ENCODE measurements at regions of chr1 and their contacts with region 1.

Region 1: GRCh38 chr1:71093938-71094337 is 13.1 kb upstream of the ZRANB2 start:
- DNase-seq: no peak
- H3K4me3 ChIP-seq: no peak overlapping the region
- H3K4me3 Mint-ChIP-seq: no peak overlapping the region
- H3K27ac ChIP-seq: no peak overlapping the region
- H3K27ac Mint-ChIP-seq: no peak overlapping the region
- H3K4me1 ChIP-seq: no peaks in the 10 kb centered on the region
- H3K4me1 Mint-ChIP-seq: no peaks in the 10 kb centered on the region
- H3K27me3 ChIP-seq: no peaks in the 10 kb centered on the region
- H3K27me3 Mint-ChIP-seq: peaks cover 2 to 12% of the 10 kb centered on the region in 2 donors

Region 2: DNA sequence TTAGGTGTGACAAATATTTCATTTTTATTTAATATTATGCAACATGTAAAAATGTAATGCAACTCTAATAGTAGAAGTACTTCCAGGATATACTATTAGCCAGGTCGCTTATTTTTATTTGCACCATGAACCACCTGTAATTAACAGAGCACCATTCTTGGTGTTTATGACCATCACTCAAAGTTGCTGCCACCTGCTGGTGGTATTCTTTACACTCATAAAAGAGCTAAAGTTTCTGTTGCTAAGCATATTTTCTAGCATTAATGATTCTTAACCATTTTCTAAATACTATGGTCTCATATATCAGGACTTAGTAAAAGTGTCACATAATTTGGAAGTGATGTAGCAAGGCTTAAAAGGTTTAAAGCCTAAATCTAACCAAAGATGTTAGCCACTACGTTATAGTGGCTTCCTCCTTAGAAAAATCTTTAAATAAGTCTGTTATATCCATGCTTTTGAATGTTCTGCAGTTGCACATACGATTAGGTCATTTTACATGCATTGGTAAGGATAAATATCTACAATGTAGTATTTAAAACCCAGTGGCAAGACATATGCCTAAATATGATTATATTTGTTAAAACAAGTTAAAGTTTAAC is 943.9 kb after region 1 on chr1:
- CTCF ChIA-PET with region 1: no interaction called
- POLR2A ChIA-PET with region 1: no interaction called
- intact Hi-C with region 1: loop called (anchors 5 kb)
- DNase-seq: no peak
- H3K4me3 ChIP-seq: no peak overlapping the region
- H3K4me3 Mint-ChIP-seq: no peak overlapping the region
- H3K27ac ChIP-seq: no peak overlapping the region
- H3K27ac Mint-ChIP-seq: no peak overlapping the region
- H3K4me1 ChIP-seq: no peaks in the 10 kb centered on the region
- H3K4me1 Mint-ChIP-seq: no peaks in the 10 kb centered on the region
- H3K27me3 ChIP-seq: no peaks in the 10 kb centered on the region
- H3K27me3 Mint-ChIP-seq: no peaks in the 10 kb centered on the region